HEK293 (cell line): ENCODE measurements at regions of chr12 and their contacts with region 1.

Region 1: DNA sequence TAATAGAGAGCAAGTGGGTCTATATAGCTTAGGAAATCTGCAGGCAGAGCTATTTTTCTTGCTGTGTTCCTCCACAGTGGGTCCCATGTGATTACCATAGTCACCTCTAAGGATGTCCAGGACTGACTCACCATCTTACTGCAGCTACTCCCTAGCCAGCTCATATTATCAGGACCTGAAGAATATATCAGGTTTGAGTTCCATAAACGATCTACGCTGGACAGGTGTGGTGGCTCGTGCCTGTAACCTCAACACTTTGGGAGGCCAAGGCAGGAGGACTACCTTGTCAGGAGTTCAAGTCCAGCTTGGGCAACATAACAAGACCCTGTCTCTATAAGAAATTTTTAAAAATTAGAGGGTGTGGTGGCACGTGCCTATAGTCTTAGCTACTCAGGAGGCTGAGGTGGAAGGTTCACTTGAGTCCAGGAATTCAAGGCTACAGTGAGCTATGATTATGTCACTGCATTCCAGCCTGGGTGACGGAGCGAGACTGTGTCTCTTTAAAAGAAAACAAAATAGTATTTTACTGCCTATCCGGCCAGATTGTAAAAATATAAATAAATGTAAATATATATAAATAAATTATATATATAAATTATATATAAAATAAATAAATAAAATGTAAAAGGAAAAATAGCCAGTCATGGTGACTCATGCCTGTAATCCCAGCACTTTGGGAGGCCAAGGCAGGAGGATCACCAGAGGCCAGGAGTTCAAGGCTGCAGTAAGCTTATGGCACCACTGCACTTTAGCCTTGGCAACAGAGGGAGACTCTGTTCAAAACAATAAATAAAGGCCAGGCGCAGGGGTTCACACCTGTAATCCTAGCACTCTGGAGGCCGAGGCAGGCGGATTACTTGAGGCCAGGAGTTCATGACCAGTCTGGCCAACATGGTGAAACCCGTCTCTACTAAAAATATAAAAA is 6.9 kb upstream of the SPRYD4 start:
- H3K4me3 ChIP-seq: no peak overlapping the region
- H3K27ac ChIP-seq: no peak overlapping the region
- H3K4me1 ChIP-seq: no peaks in the 10 kb centered on the region
- CTCF ChIP-seq: no peak

Region 2: GRCh38 chr12:56448860-56449621 is 12.5 kb before region 1 on chr12 and contains the start of gene TIMELESS:
- CTCF ChIA-PET with region 1: interaction called, 29 read pairs
- POLR2A ChIA-PET with region 1: interaction called, 12 read pairs
- H3K4me3 ChIP-seq: peak within 1 kb of the TSS; percentile 59
- H3K27ac ChIP-seq: peak within 1 kb of the TSS; percentile 93
- H3K4me1 ChIP-seq: peaks cover 5% of the 10 kb centered on the region
- CTCF ChIP-seq: peak; percentile 48; the same call in 1 of the 2 replicates

Region 3: GRCh38 chr12:56551070-56551469 is 89.6 kb after region 1 on chr12:
- CTCF ChIA-PET with region 1: no interaction called
- POLR2A ChIA-PET with region 1: no interaction called
- H3K4me3 ChIP-seq: no peak overlapping the region
- H3K27ac ChIP-seq: no peak overlapping the region
- H3K4me1 ChIP-seq: no peaks in the 10 kb centered on the region
- CTCF ChIP-seq: no peak